Mammary epithelial cell (primary cell): ENCODE measurements at regions of chr10 and their contacts with region 1.

Region 1: GRCh38 chr10:84548869-84549268 is 220.5 kb downstream of the CCSER2 start:
- DNase-seq: no peak
- H3K4me3 ChIP-seq: no peak overlapping the region
- H3K27ac ChIP-seq: no peak overlapping the region
- H3K4me1 ChIP-seq: no peaks in the 10 kb centered on the region
- H3K27me3 ChIP-seq: no peaks in the 10 kb centered on the region
- CTCF ChIP-seq: peak; percentile 22 to 27

Region 2: DNA sequence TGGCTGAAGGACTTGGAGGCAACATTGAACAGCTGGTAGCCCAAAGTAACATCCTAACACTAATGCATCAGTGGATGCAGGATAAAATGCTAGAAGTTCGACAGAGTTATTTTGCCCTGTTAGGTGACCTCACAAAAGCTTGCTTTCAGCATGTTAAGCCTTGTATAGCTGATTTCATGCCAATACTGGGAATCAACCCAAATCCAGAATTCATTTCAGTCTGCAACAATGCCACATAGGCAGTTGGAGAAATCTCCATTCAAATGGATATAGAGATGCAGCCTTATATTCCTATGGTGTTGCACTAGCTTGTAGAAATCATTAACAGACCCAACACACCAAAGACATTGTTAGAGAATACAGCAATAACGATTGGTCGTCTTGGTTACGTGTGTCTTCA is 157.5 kb before region 1 on chr10:
- CTCF ChIA-PET with region 1: no interaction called
- dilution Hi-C with region 1: no loop called
- in situ Hi-C with region 1: no loop called
- intact Hi-C with region 1: no loop called
- DNase-seq: no peak
- H3K4me3 ChIP-seq: no peak overlapping the region
- H3K27ac ChIP-seq: no peak overlapping the region
- H3K4me1 ChIP-seq: no peaks in the 10 kb centered on the region
- H3K27me3 ChIP-seq: no peaks in the 10 kb centered on the region
- CTCF ChIP-seq: no peak

Region 3: DNA sequence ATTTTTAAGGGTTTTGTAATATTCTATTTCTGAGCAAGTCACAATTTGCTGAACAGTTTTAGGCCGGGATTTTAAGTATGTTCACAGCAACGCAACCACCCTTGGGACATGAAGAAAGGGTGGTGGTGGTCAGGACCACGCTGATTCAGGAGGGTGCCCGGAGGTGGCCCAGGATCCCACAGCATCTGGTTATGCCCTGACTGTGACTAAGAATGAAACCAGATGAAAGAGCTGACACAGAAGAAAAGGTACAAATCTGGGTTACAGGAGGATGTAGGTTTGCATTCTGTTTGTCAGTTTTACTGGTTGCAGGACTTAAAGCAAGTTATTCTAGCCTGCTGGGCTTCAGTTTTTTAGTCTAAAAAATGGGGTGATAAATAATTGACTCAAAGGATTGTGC is 59.3 kb after region 1 on chr10:
- CTCF ChIA-PET with region 1: no interaction called
- dilution Hi-C with region 1: loop called (anchors 5 kb)
- in situ Hi-C with region 1: no loop called
- intact Hi-C with region 1: no loop called
- DNase-seq: no peak
- H3K4me3 ChIP-seq: no peak overlapping the region
- H3K27ac ChIP-seq: no peak overlapping the region
- H3K4me1 ChIP-seq: no peaks in the 10 kb centered on the region
- H3K27me3 ChIP-seq: no peaks in the 10 kb centered on the region
- CTCF ChIP-seq: no peak